Breast epithelium (tissue), 4 donors: ENCODE measurements at regions of chr5 and their contacts with region 1.

Region 1: DNA sequence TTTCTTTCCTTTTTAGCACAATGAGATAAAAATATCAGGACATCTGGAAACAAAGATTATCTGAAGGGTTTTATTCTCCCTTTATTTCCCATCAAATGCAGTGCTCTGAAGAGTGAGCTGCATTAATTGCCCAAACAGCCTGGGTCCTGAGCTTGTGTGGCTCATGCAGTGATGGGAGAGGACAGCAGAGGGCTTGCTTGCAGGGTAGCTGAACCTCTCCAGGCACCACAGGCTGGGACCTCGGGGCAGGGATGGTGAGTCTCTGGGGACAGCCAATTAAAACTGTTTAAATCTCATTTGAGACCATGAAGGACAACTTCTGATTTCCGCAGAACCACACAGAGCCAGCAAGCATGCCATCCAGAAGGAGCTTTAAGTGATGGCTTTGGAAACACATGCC is 71.3 kb downstream of the PLAC8L1 start:
- DNase-seq: no peak
- H3K4me3 ChIP-seq: no peak overlapping the region
- H3K27ac ChIP-seq: no peak overlapping the region
- H3K4me1 ChIP-seq: no peaks in the 10 kb centered on the region
- H3K27me3 ChIP-seq: no peaks in the 10 kb centered on the region
- CTCF ChIP-seq: no peak
- POLR2A ChIP-seq: no peak

Region 2: GRCh38 chr5:146151970-146152369 is 117.8 kb after region 1 on chr5:
- intact Hi-C with region 1: loop called (anchors 5 kb)
- DNase-seq: no peak
- H3K4me3 ChIP-seq: no peak overlapping the region
- H3K27ac ChIP-seq: no peak overlapping the region
- H3K4me1 ChIP-seq: no peaks in the 10 kb centered on the region
- H3K27me3 ChIP-seq: no peaks in the 10 kb centered on the region
- CTCF ChIP-seq: no peak
- POLR2A ChIP-seq: no peak